Heart right ventricle (tissue), 16 donors: ENCODE measurements at regions of chr9 and their contacts with region 1.

Region 1: GRCh38 chr9:120109242-120109641 is 470.7 kb downstream of the CDK5RAP2 start:
- DNase-seq: no peak
- ATAC-seq: no peak
- H3K4me3 ChIP-seq: no peak overlapping the region
- H3K27ac ChIP-seq: no peak overlapping the region
- H3K4me1 ChIP-seq: no peaks in the 10 kb centered on the region
- H3K27me3 ChIP-seq: peaks cover 0 to 22% (median 5%) of the 10 kb centered on the region in 7 donors
- CTCF ChIP-seq: no peak

Region 2: DNA sequence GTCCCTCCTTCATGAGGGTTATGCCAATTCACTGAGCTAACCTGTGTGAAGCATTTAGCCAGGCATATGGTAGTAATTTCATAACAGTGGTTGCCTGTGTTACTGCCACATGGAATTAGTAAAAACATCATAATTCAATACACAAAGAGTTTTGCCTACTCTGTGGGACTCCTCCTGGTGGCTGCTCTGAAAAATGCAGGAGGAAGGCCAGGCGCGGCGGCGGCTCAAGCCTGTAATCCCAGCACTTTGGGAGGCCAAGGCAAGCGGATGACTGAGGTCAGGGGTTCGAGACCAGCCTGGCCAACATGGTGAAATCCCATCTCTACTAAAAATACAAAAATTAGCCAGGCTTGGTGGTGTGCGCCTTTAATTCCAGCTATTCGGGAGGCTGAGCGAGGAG is 76.6 kb before region 1 on chr9:
- intact Hi-C with region 1: no loop called
- DNase-seq: no peak
- ATAC-seq: no peak
- H3K4me3 ChIP-seq: no peak overlapping the region
- H3K27ac ChIP-seq: no peak overlapping the region
- H3K4me1 ChIP-seq: no peaks in the 10 kb centered on the region
- H3K27me3 ChIP-seq: peaks cover 0 to 7% (median 0%) of the 10 kb centered on the region in 7 donors
- CTCF ChIP-seq: peak in 2 of 9 donors; percentile 6 to 16

Region 3: GRCh38 chr9:120161736-120162135 is 52.5 kb after region 1 on chr9:
- intact Hi-C with region 1: loop called in 1 of 10 experiments (anchors 10 kb)
- DNase-seq: no peak
- ATAC-seq: no peak
- H3K4me3 ChIP-seq: no peak overlapping the region
- H3K27ac ChIP-seq: no peak overlapping the region
- H3K4me1 ChIP-seq: no peaks in the 10 kb centered on the region
- H3K27me3 ChIP-seq: no peaks in the 10 kb centered on the region
- CTCF ChIP-seq: no peak